ENCODE measurements at regions of chr2 and their contacts with region 1.

Region 1: DNA sequence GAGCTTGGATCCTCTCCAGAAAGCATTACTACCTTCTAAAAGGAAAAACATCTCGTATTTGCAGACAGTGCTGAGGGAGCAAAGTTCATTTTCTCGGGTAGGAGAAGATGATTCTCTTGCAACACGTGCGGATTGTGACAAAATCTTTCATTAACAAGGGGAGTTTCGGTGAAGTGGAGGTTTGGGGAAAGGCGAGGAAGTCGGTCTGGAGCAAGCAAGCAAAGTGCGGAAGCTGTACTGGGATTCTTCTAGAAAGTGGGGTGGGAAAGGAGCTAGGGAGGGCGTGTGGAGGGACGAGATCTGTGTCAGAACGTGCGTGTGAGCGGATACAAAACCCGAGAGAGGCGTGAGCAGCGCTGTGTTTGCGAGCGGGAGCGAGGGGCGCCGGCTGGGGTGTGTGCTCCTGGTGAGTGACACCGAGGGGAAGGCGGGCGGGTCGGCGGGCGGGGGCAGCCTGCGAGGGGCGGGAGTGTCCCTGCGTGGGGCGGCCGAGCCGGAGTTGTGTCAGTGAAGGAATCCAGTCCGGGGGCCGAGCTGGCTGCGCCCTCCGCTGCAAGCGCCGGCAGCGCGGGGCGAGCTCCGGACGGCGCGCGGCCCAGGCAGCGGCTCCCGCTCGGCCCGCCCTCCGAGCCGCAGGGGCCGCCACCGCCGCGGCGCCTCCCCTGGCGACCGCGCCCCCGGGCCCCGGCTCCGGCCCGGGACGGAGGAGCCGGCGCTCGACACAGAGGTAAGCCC is at the start of gene SPATS2L:
- DNase-seq: peak; percentile 80
- H3K4me3 ChIP-seq: peak within 1 kb of the TSS; percentile 75 to 88 (median 83)
- H3K27ac ChIP-seq: peak within 1 kb of the TSS; percentile 97
- H3K4me1 ChIP-seq: peaks cover 55% of the 10 kb centered on the region
- H3K27me3 ChIP-seq: no peaks in the 10 kb centered on the region
- CTCF ChIP-seq: no peak
- total RNA-seq, gene SPATS2L: 60.0 to 98.2 TPM

Region 2: DNA sequence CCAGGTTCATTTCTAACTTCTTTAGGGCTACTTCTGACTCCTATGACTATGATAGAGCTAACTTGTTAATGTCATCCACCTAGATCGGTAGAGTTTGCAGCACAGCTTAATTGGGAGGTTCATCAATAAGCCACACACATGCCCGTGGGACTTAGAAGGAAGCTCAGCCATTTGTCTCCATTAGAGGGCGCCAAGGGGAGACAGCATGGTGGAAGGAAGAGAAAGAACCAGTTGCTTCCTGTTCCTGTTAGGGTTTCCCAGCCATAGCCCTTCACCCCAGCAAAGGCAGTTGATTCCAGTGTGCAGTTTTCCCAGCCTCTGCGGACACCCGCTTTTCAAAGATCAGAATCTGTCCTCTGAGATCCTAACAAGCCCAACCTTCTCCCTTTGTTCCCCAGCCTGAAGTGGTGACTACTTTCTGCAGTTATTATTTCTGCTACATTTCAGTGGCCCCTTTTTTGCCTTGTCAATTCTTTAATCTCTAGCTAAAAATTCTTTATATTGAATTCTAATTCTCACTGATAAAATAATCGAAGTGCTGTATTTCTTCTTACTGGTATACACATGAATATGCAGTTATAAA is 320.6 kb before region 1 on chr2:
- CTCF ChIA-PET with region 1: interaction called, 16 read pairs
- dilution Hi-C with region 1: no loop called
- in situ Hi-C with region 1: loop called (anchors 10 kb)
- intact Hi-C with region 1: loop called (anchors 1 kb)
- DNase-seq: peak; percentile 60
- H3K4me3 ChIP-seq: no peak overlapping the region
- H3K27ac ChIP-seq: no peak overlapping the region
- H3K4me1 ChIP-seq: peaks cover 13% of the 10 kb centered on the region
- H3K27me3 ChIP-seq: no peaks in the 10 kb centered on the region
- CTCF ChIP-seq: peak; percentile 76 to 86

Region 3: GRCh38 chr2:200156166-200156835 is 150.1 kb before region 1 on chr2:
- CTCF ChIA-PET with region 1: no interaction called
- dilution Hi-C with region 1: no loop called
- in situ Hi-C with region 1: no loop called
- intact Hi-C with region 1: loop called (anchors 10 kb)
- DNase-seq: peak; percentile 83
- H3K4me3 ChIP-seq: peak overlapping the region in 1 of 3 experiments; percentile 23
- H3K27ac ChIP-seq: no peak overlapping the region
- H3K4me1 ChIP-seq: no peaks in the 10 kb centered on the region
- H3K27me3 ChIP-seq: no peaks in the 10 kb centered on the region
- CTCF ChIP-seq: no peak

Region 4: GRCh38 chr2:200274116-200275075 is 32.0 kb before region 1 on chr2:
- CTCF ChIA-PET with region 1: no interaction called
- dilution Hi-C with region 1: loop called (anchors 5 kb)
- in situ Hi-C with region 1: no loop called
- intact Hi-C with region 1: loop called (anchors 2 kb)
- DNase-seq: peak; percentile 44
- H3K4me3 ChIP-seq: no peak overlapping the region
- H3K27ac ChIP-seq: no peak overlapping the region
- H3K4me1 ChIP-seq: peaks cover 29% of the 10 kb centered on the region
- H3K27me3 ChIP-seq: no peaks in the 10 kb centered on the region
- CTCF ChIP-seq: no peak

Region 5: GRCh38 chr2:200338701-200339100 is 32.3 kb after region 1 on chr2:
- CTCF ChIA-PET with region 1: no interaction called
- dilution Hi-C with region 1: no loop called
- in situ Hi-C with region 1: no loop called
- intact Hi-C with region 1: no loop called
- DNase-seq: no peak
- H3K4me3 ChIP-seq: no peak overlapping the region
- H3K27ac ChIP-seq: no peak overlapping the region
- H3K4me1 ChIP-seq: peaks cover 8% of the 10 kb centered on the region
- H3K27me3 ChIP-seq: no peaks in the 10 kb centered on the region
- CTCF ChIP-seq: no peak

Region 6: GRCh38 chr2:200405599-200406298 is 99.4 kb after region 1 on chr2:
- CTCF ChIA-PET with region 1: no interaction called
- dilution Hi-C with region 1: no loop called
- in situ Hi-C with region 1: no loop called
- intact Hi-C with region 1: loop called (anchors 2 kb)
- DNase-seq: peak; percentile 87
- H3K4me3 ChIP-seq: peak overlapping the region; percentile 6 to 43 (median 42)
- H3K27ac ChIP-seq: peak overlapping the region; percentile 88
- H3K4me1 ChIP-seq: peaks cover 52% of the 10 kb centered on the region
- H3K27me3 ChIP-seq: no peaks in the 10 kb centered on the region
- CTCF ChIP-seq: no peak

Measured in mammary epithelial cell (primary cell).